AG04449 (cell line): ENCODE measurements at regions of chr12 and their contacts with region 1.

Region 1: DNA sequence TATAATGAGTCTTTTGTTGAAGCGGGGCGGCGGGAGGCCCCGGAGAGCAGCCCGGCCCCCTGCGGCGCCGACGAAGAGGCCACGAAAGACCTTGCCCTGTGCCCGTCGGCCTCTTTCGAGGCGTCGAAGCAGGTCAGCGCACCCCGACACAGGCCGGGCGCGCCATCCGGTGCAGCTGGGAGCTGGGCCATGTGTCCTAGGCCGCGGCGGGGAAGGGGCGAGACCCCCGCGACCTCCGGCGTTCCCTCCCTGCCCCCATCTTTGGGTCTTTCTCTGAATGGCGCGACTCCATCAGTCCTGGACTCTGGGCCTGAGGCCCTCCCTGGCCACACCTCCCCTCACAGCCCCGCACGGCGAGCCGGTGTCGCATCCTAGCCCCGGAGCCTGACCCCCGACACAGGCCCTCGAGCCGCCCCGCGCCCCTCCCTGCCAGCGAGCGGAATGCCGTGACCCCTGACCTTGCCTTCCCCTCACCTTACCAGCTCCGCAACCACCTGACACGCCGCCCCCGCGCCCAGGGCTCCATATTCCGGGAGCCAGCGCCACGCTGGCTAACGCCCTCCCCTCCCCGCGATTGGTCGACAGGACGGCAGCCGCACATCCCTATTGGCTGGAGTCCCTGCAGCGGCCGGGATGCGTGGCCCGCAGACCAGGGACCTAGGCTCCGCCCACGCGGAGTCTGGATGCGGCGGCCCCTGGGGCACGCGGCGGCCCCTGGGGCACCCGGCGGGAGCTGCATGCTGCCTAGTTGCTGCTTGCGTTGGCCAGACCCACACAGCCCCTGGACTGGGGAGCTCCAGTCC is at the start of gene SLC11A2:
- DNase-seq: peak; percentile 59
- H3K4me3 ChIP-seq: peak within 1 kb of the TSS; percentile 95
- CTCF ChIP-seq: no peak

Region 2: DNA sequence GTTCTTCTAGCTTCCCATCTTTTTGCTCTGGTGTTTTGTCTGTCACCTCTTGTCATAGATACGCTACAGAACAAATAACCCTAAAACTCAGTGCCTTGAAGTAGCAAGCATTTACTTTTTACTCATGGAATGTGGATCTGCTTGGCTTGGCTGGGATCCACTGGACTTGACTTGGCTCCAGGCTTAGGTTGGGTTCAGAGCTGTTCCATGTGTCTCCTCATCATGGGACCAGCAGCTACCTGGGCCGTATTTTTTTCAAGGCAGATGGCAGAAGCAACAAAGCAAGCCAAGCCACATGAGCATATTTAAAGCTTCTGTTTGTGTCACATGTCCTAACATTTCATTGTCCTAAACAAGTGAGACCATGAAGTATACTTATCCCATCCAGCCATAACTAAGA is 310.9 kb before region 1 on chr12:
- CTCF ChIA-PET with region 1: no interaction called
- POLR2A ChIA-PET with region 1: no interaction called
- DNase-seq: no peak
- H3K4me3 ChIP-seq: no peak overlapping the region
- CTCF ChIP-seq: no peak

Region 3: DNA sequence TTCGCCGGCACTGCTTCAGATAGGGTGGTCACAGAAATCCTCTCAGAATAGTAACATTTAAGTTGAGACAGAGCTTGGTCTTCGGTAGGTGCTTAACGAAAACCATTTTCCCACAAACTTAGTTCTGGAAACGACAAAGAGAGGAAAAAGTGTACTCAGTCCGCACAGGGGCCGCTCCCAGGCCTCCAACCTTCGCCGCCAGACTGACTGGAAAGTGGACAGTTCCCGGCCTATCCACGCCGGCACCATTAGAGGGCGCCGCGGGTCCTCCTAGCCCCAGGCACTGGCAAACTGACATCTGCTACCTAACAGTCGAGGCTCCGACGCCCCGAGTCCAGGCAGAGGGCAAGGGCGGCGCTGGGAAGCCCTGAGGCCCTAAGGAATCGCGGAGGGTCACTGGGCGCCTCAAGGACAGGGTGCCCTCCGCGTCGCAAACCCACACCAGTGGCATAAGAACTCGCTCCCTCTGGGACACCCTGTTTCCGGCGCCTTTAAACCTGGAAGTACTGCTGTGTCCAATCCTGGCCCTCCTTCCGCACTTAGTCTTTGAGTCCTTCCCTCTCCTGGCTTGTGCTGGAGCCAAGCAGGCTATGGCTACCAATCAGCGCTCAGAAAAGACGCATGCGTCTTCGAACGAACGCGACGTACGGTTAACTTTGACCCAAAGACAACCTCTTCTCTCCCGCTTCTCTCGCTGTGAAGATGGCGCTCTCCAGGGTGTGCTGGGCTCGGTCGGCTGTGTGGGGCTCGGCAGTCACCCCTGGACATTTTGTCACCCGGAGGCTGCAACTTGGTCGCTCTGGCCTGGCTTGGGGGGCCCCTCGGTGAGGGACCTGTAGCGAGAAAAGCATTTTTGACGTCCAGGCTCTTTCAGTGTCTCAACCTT is 21.9 kb after region 1 on chr12 and contains the start of gene LETMD1:
- CTCF ChIA-PET with region 1: interaction called, 11 read pairs
- POLR2A ChIA-PET with region 1: interaction called, 4 read pairs
- DNase-seq: peak; percentile 91
- H3K4me3 ChIP-seq: peak within 1 kb of the TSS; percentile 94
- CTCF ChIP-seq: peak; percentile 98

Region 4: GRCh38 chr12:52203075-52203921 is 1177.3 kb after region 1 on chr12:
- CTCF ChIA-PET with region 1: no interaction called
- POLR2A ChIA-PET with region 1: no interaction called
- DNase-seq: peak; percentile 67
- H3K4me3 ChIP-seq: peak overlapping the region; percentile 13
- CTCF ChIP-seq: no peak